Colonic mucosa (tissue), 4 donors: ENCODE measurements at regions of chr12 and their contacts with region 1.

Region 1: GRCh38 chr12:71780237-71780822 is 25.7 kb downstream of the RAB21 start:
- DNase-seq: peak; percentile 57
- H3K4me3 ChIP-seq: no peak overlapping the region
- H3K27ac ChIP-seq: no peak overlapping the region
- H3K4me1 ChIP-seq: no peaks in the 10 kb centered on the region
- H3K27me3 ChIP-seq: no peaks in the 10 kb centered on the region
- CTCF ChIP-seq: peak; percentile 51

Region 2: DNA sequence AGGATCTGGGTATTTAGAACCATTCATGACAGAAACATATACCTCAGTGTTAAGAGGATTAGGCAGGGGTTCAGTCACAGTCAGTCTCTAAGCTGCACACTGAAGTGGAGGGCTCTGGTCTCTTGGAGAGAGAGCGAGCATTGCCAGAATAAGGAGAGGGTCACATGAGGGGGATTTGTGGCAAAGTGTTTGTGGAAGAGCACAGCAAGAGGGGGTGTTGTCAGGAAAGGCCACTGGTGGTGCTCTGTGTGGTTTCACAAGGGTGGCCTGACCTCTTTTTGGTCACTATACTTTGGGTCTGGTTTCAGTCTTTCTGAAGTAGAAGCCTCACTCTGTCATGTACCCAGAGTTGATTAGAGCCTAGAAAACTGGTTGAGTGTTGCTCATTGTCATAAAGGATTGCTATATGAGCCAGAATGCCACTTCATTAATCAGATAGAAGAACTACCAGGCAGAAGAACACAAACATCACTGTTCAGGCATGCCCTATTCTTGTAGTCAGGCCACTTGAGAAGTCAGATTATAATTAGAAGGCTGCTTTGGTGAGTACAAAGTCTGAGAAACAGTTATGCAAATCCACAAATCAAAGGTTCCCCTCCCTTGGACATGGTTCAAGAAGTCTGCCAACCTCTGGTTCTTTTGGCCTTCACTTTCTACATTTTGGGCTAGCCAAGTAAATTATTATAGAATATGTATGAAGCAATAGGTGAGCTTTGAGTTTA is 86.1 kb before region 1 on chr12:
- intact Hi-C with region 1: no loop called
- DNase-seq: peak; percentile 60
- H3K4me3 ChIP-seq: no peak overlapping the region
- H3K27ac ChIP-seq: peak overlapping the region; percentile 70
- H3K4me1 ChIP-seq: peaks cover 2% of the 10 kb centered on the region
- H3K27me3 ChIP-seq: no peaks in the 10 kb centered on the region
- CTCF ChIP-seq: no peak

Region 3: DNA sequence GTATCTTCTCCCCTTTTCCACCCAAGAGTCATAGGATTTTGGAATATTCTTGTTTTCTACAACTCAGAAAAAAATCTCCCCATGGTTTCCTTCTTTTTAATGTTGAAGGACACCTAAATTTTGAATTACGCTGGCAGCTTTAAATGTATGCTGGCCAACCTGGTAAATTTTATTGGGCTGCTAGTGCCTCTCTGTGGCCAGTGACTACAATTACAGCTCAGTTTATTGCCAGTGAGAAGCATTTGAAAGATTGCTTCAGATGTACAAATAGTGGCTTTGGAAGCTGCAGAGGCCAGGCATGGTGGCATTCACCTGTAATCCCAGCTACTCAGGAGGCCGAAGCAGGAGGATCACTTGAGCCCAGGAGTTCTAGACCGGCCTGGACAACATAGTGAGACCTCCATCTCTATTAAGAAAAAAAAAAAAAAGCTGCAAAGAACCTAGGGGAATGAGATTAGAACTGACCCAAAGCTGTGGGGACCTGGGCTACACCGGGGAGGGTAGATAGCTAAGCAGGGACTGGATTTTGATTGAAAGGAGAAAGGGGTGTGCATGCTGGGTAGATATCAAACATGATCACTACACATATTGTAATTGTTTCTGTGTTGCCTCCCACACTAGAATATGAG is 33.2 kb before region 1 on chr12:
- intact Hi-C with region 1: no loop called
- DNase-seq: peak; percentile 51
- H3K4me3 ChIP-seq: no peak overlapping the region
- H3K27ac ChIP-seq: no peak overlapping the region
- H3K4me1 ChIP-seq: no peaks in the 10 kb centered on the region
- H3K27me3 ChIP-seq: no peaks in the 10 kb centered on the region
- CTCF ChIP-seq: peak; percentile 72

Region 4: GRCh38 chr12:71846322-71846940 is 66.1 kb after region 1 on chr12:
- intact Hi-C with region 1: loop called (anchors 5 kb)
- DNase-seq: no peak
- H3K4me3 ChIP-seq: no peak overlapping the region
- H3K27ac ChIP-seq: no peak overlapping the region
- H3K4me1 ChIP-seq: no peaks in the 10 kb centered on the region
- H3K27me3 ChIP-seq: no peaks in the 10 kb centered on the region
- CTCF ChIP-seq: peak; percentile 29